ENCODE measurements at regions of chr11 and their contacts with region 1.

Region 1: DNA sequence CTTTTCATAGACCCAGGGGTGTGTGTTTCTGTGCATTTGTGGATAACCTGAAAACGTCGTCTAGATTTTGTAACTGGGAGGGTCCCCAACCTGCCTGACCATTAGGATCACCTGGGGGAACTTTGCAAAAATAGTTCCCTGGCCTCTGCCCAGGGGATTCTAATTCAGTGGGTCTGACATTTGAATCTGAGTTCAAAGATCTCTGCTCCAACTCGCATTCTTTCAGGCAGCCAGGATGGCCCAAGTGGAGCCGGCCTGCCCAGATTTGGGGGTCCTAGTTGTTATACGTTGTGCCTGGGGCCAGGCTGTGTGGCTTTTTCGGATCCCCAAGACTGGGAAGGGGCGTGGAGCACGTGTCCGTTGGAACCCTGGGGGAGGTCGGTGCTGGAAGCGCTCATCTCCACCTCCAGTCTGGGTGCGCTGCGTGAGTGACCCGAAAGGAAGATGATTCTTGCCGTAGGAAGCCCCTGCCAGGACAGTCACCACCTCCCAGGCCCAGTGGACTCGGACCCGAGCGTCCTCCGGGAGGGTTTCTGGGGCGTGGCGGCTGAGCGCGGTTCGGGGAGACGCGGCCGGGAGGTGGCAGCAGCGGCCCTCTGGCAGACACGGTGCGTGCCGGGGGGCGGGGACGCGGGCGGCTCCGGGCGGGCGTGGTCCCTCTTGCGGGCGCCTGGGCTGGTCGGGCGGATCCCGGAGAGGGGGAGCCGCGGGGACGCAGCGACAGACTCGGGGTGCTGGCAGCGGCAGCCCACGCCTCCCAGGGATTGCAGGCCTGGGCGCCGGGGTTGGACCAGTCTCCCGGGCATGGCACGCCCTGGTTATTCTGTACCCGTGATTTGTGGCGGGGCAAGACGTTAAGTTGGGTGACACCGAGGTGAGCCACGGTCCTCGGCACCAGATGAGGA is 29.2 kb upstream of the PLET1 start:
- DNase-seq: peak; percentile 88
- ATAC-seq: peak; percentile 98
- H3K4me3 Mint-ChIP-seq: peak overlapping the region; percentile 69
- H3K27ac Mint-ChIP-seq: peak overlapping the region; percentile 70
- H3K4me1 Mint-ChIP-seq: peaks cover 23% of the 10 kb centered on the region
- H3K27me3 Mint-ChIP-seq: peaks cover 13% of the 10 kb centered on the region

Region 2: DNA sequence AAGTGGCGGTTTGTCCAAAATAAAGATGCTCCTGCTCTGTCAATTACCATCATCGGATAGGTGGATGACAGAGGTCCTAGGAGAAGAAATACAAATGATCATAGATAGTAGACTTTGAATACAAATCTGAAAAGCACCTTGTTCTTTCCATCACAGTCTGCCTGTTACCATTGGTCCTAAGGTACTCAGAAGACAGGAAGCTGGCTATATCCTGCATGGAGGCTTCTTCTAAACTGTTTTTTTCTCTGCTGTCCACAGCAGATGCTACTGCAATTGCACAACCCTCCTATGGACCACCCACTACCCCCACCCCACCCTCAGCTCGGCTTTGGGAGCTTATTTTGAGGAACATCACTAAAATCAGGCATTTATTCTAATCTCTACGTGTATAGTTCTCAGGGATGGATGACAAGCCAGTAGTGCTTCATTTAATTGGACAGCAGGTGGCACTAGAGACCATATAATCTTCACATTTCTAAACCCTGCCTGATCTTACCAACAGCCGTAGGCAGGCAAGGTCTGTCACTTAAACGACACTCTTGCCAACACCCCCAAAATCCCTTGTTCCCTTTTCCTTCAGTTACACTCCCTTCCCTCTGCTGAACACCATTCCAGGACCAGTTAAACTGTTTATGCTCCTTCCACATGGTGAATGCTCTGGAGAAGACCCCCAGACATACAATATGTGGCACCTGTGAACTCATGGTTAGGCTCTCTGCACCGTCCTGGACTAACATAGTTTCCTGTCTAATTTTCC is 70.2 kb before region 1 on chr11:
- CTCF ChIA-PET with region 1: interaction called, 264 read pairs
- POLR2A ChIA-PET with region 1: no interaction called
- DNase-seq: peak; percentile 63
- ATAC-seq: peak; percentile 97
- H3K4me3 Mint-ChIP-seq: no peak overlapping the region
- H3K27ac Mint-ChIP-seq: no peak overlapping the region
- H3K4me1 Mint-ChIP-seq: peaks cover 3% of the 10 kb centered on the region
- H3K27me3 Mint-ChIP-seq: no peaks in the 10 kb centered on the region

Region 3: DNA sequence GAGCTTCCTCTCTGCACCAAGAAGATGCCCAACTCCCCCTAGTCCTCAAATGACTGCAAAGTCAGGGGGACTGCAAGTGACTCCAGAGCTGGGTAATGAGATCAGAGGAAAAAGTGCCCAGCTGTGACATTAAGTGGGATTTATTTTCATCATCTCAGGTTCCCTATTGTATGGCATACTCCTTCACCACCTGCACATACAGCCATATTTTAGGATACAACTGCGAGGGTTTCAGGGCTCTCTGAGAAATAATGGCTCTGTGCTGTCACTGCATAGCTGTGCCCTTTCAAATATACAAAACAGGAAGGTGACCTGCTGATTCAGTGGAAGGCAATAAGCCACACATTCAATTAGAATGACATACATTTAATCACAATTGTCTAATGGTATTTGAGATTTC is 16.4 kb after region 1 on chr11:
- CTCF ChIA-PET with region 1: no interaction called
- POLR2A ChIA-PET with region 1: no interaction called
- DNase-seq: no peak
- ATAC-seq: no peak
- H3K4me3 Mint-ChIP-seq: no peak overlapping the region
- H3K27ac Mint-ChIP-seq: no peak overlapping the region
- H3K4me1 Mint-ChIP-seq: peaks cover 22% of the 10 kb centered on the region
- H3K27me3 Mint-ChIP-seq: no peaks in the 10 kb centered on the region

Region 4: DNA sequence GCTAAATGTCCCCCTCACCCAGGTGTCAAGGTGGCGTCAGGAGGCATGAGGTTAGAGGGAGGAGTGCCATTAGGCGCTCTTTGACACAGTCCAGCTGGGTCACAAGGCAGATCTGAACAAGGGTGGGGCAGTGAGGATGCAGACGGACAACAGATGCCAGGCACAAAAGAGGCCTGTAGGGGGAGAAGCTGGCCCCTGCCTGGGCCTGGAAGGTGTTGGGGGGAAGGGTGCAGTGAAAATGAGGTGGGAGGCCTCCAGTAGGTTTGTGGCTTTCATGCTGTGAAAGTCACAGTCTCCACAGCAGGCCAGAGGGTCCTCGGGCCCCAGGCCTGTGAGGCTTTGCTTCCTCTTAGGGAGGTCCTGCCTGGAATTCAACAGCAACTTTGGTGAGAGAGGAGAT is 55.9 kb after region 1 on chr11:
- CTCF ChIA-PET with region 1: no interaction called
- POLR2A ChIA-PET with region 1: no interaction called
- DNase-seq: no peak
- ATAC-seq: no peak
- H3K4me3 Mint-ChIP-seq: no peak overlapping the region
- H3K27ac Mint-ChIP-seq: no peak overlapping the region
- H3K4me1 Mint-ChIP-seq: no peaks in the 10 kb centered on the region
- H3K27me3 Mint-ChIP-seq: no peaks in the 10 kb centered on the region

Region 5: DNA sequence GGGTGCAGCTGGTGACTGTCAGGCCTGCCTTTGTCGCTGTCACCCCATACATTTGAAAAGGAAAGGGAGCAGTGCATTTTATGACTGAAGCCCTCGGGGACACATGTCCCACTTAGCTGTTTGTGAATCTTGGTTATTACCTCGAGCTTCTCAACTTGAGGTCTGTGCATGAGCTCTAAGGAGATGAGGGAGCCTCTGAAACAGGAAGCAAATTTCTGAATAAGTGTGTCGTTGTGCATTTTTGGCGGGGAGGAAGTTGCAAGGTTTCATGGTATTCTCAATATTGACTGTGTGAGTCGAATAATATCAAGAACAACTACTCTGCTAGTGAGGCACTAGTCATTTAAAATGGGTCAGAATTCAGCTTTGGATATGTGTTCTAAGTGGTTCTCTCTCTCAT is 120.5 kb after region 1 on chr11:
- CTCF ChIA-PET with region 1: no interaction called
- POLR2A ChIA-PET with region 1: no interaction called
- DNase-seq: no peak
- ATAC-seq: no peak
- H3K4me3 Mint-ChIP-seq: no peak overlapping the region
- H3K27ac Mint-ChIP-seq: no peak overlapping the region
- H3K4me1 Mint-ChIP-seq: peaks cover 4% of the 10 kb centered on the region
- H3K27me3 Mint-ChIP-seq: peaks cover 5% of the 10 kb centered on the region

Region 6: DNA sequence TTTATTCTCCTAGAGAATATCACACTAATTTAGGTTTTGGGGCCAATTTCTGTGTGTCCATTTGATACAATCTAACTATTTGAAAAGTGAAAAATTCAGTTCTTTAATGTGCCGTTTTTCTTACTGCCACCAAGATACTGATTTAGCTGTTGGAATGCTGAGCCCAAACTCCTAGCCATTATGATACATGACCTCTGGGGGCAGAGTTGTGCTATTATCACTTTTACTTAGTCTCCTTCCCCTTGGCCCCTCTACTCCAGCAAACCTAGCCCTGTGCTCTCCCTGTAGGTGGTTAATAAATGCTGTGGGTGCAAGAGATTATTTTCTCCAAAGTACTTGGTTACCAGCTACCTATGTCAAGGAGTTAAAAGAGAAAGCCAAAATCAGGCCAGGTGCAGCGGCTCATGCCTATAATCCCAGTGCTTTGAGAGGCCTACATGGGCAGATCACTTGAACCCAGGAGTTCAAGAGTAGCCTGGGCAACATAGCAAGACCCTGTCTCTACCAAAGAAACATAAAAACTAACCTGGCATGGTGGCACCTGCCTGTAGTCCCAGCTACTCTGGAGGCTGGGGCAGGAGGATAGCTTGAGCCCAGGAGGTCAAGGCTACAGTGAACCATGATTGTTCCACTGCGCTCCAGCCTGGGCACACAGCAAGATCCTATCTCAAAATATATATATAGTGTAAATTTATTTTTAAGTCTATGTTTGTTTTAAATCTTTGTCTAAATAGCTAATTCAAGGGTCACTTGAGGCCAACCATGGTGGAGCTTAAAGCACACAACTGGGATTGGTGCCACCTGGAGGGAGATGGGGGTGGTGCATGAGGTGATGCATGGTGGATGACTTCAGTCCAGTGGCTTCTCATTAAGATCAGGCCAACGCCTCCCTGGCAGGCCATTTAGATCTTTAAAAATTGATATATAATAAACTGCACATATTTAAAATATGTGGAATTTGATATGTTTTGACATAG is 164.0 kb after region 1 on chr11:
- CTCF ChIA-PET with region 1: interaction called, 15 read pairs
- POLR2A ChIA-PET with region 1: no interaction called
- DNase-seq: peak; percentile 60
- ATAC-seq: peak; percentile 57
- H3K4me3 Mint-ChIP-seq: no peak overlapping the region
- H3K27ac Mint-ChIP-seq: no peak overlapping the region
- H3K4me1 Mint-ChIP-seq: peaks cover 5% of the 10 kb centered on the region
- H3K27me3 Mint-ChIP-seq: peaks cover 11% of the 10 kb centered on the region

Region 7: DNA sequence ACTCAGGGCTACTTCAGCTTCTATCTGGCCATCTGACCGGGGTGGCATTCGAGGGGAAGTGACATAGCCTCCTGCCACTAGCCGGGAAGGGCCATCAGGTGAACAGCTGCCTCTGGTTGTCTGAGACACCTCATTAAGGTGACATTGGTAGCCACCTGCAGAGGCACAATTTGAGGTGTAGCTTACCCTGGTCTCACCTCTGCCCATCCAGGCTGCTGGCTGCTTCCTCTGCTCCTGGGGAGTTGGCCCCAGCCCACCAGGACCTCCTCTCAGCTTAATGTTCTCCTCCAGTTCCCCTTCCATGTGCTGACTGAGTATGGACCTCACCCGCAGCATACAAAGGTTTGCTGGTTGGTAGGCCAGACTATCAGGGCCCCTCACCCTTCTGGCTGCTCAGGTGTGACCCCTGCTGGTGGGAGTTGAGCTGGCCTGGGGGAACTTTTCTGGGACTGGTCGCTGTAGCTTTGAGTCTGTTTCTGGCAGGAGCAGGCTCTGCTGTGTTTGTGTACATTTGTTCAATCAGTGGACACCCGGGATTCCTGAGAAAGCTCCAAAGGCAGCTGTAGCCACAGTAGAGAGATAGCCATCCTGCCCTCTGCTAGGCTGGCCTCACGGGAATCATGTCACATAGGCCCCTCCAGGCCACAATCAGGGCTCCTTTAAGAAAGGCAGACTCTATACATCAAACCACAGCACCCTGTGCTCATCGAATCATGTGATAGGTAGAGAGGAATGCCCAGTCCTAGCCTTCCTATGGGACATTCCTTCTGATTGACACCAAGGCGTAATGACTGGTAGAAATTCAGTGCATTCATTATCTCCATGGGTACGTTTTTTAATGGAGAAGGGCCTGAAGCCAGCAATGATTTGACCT is 265.9 kb after region 1 on chr11:
- CTCF ChIA-PET with region 1: interaction called, 24 read pairs
- POLR2A ChIA-PET with region 1: no interaction called
- DNase-seq: peak; percentile 66
- ATAC-seq: peak; percentile 76
- H3K4me3 Mint-ChIP-seq: no peak overlapping the region
- H3K27ac Mint-ChIP-seq: peak overlapping the region; percentile 37
- H3K4me1 Mint-ChIP-seq: no peaks in the 10 kb centered on the region
- H3K27me3 Mint-ChIP-seq: peaks cover 2% of the 10 kb centered on the region

Region 8: GRCh38 chr11:112588252-112588694 is 298.4 kb after region 1 on chr11:
- CTCF ChIA-PET with region 1: interaction called, 11 read pairs
- POLR2A ChIA-PET with region 1: no interaction called
- DNase-seq: peak; percentile 56
- ATAC-seq: peak; percentile 90
- H3K4me3 Mint-ChIP-seq: no peak overlapping the region
- H3K27ac Mint-ChIP-seq: no peak overlapping the region
- H3K4me1 Mint-ChIP-seq: no peaks in the 10 kb centered on the region
- H3K27me3 Mint-ChIP-seq: peaks cover 15% of the 10 kb centered on the region

Measured in activated CD8-positive, alpha-beta T cell treated with anti-CD3 and anti-CD28 coated beads, Interleukin-2, amount 10 ng/mL, durations not matched to agents 7 days and 5 days (primary cell).